ENCODE measurements at regions of chr7 and their contacts with region 1.

Region 1: DNA sequence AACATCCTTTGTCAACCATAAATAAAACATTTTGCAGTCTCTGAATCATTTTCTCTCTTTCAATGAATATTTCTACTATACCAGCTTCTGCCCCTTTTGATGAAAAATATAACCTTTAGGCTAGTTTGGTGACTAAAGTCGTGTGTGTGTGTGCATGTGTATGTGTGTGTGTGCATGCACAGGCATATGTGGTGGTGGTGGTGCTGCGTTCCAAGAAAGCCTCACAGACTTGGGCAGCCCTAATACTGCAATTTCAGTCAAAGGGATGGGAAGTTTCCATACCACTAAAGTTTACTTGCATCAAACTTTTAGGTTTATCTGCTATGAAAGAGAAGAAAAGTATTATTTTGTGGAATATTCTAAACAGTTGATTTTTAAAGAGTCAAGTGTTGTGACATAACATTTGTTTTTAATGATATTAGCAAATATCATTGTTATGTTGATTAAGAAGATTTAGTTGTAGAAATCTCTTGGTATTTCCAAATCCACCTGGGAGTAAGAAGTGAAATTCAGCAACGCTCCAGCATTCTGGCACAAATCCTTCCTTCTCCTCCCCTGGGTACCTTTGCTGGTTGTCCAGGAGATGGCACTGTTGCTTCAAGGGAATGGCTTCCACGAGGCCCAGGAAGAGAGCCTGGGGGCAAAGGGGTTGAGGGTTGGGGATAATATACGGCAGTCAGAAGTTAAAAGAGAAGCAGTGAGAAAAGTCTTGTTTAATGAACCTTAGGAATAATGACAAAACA is 41.5 kb downstream of the ASB4 start:
- DNase-seq: no peak
- H3K4me3 ChIP-seq: no peak overlapping the region
- H3K27ac ChIP-seq: no peak overlapping the region
- H3K4me1 ChIP-seq: peaks cover 0 to 15% (median 0%) of the 10 kb centered on the region in 3 donors
- H3K27me3 ChIP-seq: no peaks in the 10 kb centered on the region
- CTCF ChIP-seq: peak; percentile 66 to 91 (median 86)
- POLR2A ChIP-seq: no peak

Region 2: GRCh38 chr7:95441042-95441823 is 86.0 kb before region 1 on chr7:
- intact Hi-C with region 1: no loop called
- DNase-seq: no peak
- H3K4me3 ChIP-seq: no peak overlapping the region
- H3K27ac ChIP-seq: no peak overlapping the region
- H3K4me1 ChIP-seq: no peaks in the 10 kb centered on the region
- H3K27me3 ChIP-seq: no peaks in the 10 kb centered on the region
- CTCF ChIP-seq: no peak
- POLR2A ChIP-seq: no peak

Region 3: DNA sequence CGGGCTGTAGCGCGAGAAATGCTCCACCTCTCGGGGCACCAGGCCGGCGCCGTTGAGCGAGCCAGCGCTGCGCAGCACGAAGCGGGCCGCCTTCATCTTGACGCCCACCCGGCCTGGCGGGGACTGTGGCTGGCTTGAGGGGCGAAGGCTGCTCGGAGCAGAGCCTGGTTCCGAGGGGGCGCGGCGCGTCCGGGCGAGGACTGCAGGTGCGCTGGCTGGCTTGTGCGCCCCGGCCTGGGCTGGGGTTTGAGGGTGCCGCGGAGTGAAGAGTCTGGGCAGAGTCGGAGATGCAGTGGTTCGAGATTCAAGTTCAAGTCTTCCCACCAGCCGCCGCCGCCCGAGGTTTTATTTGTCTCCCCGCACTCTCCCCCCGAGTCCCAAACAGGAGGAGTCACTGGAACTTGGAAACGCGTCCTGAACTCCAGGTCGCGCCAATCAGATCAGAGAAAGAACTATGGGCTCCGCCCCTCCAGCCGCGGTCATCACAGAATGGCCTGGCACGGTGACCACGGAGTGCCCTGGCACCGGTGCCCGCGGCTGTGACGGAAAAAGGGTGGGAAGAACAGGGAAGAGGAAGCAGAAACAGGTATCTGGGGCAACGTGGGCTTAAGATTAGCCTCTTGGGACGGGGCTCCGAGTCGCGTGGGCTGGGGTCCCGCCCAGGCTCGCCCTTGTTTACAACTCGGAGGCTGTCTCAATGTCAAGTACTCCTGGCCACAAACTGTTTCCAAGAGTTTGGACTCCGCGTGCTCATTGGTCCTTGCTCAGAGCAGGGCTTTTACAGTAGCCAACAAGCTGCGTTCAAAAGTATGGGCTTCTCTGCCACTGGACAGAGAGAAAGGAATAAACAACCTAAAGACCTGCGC is 69.2 kb after region 1 on chr7 and contains the start of gene PDK4:
- intact Hi-C with region 1: no loop called
- DNase-seq: peak; percentile 20
- H3K4me3 ChIP-seq: peak within 1 kb of the TSS; percentile 51 to 86 (median 72)
- H3K27ac ChIP-seq: peak within 1 kb of the TSS; percentile 77 to 98 (median 94)
- H3K4me1 ChIP-seq: peaks cover 0 to 15% (median 5%) of the 10 kb centered on the region in 3 donors
- H3K27me3 ChIP-seq: no peaks in the 10 kb centered on the region
- CTCF ChIP-seq: no peak
- POLR2A ChIP-seq: peak in 2 of 4 donors; percentile 82 to 93
- total RNA-seq, gene PDK4: 4.1 to 129 (median 64.6) TPM

Region 4: GRCh38 chr7:95686109-95686508 is 158.9 kb after region 1 on chr7:
- intact Hi-C with region 1: loop called (anchors 5 kb)
- DNase-seq: no peak
- H3K4me3 ChIP-seq: no peak overlapping the region
- H3K27ac ChIP-seq: no peak overlapping the region
- H3K4me1 ChIP-seq: peaks cover 5 to 25% (median 8%) of the 10 kb centered on the region in 3 donors
- H3K27me3 ChIP-seq: no peaks in the 10 kb centered on the region
- CTCF ChIP-seq: peak in 5 of 6 experiments; percentile 41 to 61 (median 60)
- POLR2A ChIP-seq: no peak

Measured in esophagus squamous epithelium (tissue), 5 donors.